ENCODE measurements at regions of chr11 and their contacts with region 1.

Region 1: DNA sequence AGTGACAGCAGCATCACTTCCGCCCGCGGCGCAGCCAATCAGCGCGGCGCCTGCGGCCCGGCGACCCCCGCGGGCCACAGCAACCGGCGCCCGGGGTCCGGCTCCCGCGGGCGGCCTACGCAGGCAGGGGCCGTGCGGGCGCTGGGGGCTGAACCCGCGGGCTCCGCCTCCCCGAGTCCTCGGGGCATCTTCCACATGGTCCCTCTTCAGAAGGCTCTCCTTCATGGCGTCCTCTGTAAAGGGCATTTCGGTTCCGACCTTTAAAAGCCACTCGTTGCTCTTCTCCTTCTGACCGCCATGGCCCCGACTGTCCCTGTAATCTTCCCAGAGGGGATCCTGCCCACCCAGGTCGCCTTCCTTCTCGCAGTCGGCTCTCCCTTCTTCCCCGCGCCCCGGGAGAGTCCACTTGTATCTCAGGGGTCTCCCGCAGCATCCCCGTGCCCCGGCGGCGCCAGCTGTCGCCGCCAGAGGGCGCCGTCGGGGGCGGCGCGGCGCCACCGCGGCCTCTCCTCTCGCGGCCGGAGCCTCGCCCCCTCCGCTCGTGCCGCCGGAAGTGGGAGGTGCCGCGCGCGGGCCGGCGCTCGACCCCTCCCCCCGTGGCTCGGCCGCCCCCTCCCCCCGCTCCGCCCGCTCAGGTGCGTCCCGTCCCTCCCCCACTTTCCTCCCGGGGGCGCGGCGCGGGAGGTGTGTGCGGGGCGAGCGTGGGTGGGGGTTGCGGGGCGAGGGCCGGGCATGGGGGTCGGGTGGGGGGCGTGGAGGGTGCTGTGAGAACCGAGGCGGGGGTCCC is at the start of gene RNF214:
- DNase-seq: peak; percentile 82
- ATAC-seq: peak; percentile 74
- H3K4me3 Mint-ChIP-seq: peak within 1 kb of the TSS; percentile 100
- H3K27ac Mint-ChIP-seq: peak within 1 kb of the TSS; percentile 100
- H3K4me1 Mint-ChIP-seq: peaks cover 43% of the 10 kb centered on the region
- H3K27me3 Mint-ChIP-seq: no peaks in the 10 kb centered on the region
- CTCF ChIP-seq: peak; percentile 69
- total RNA-seq, gene RNF214: 18.7 and 22.3 TPM in 2 replicates

Region 2: GRCh38 chr11:117117681-117118080 is 114.6 kb before region 1 on chr11:
- CTCF ChIA-PET with region 1: no interaction called
- POLR2A ChIA-PET with region 1: interaction called, 10 read pairs
- intact Hi-C with region 1: no loop called
- DNase-seq: no peak
- ATAC-seq: no peak
- H3K4me3 Mint-ChIP-seq: no peak overlapping the region
- H3K27ac Mint-ChIP-seq: no peak overlapping the region
- H3K4me1 Mint-ChIP-seq: no peaks in the 10 kb centered on the region
- H3K27me3 Mint-ChIP-seq: no peaks in the 10 kb centered on the region
- CTCF ChIP-seq: no peak

Region 3: DNA sequence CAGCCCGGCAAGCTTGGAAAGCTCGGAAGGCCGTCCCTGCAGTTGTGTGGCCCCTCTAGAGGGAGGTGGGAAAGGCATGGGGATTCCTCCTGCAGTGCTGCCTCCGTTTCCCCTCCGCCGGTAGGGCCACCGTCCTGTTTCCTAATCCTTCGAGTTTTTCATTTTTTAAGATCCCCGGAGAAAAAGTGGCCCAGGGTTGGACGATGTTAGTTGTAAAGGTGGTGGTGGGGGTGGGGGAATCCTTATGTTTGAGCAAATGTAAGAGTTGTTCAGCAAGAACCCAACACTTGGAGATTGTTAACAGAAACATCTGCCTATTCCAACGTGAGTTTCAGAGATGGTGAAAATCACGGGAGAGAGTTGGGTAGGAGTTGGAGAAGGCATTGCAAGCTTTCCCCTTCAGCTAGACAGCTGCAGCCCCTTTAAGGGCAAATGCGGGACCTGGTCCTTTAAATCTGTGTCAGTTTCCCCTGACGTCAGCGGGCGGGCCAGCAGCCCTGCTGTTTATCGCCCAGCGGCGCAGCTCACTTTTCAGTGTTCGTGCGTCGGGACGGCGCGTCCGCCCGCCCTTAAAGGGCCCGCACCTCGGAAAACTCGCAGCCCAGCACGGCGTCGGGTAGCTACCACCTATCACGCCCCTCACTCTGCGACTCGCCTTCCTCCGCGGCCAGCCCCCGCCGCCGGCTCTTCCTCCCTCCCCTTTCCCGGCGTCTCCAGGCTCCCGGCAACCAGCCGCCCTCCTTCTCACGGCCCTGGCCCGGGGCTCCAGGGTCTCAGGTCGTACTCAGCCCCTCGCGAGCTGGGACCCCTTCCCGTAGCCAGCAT is 53.9 kb before region 1 on chr11 and contains the start of gene SIDT2:
- CTCF ChIA-PET with region 1: interaction called, 119 read pairs
- POLR2A ChIA-PET with region 1: interaction called, 89 read pairs
- intact Hi-C with region 1: loop called (anchors 1 kb)
- DNase-seq: peak; percentile 80
- ATAC-seq: peak; percentile 88
- H3K4me3 Mint-ChIP-seq: peak within 1 kb of the TSS; percentile 96
- H3K27ac Mint-ChIP-seq: peak within 1 kb of the TSS; percentile 91
- H3K4me1 Mint-ChIP-seq: peaks cover 34% of the 10 kb centered on the region
- H3K27me3 Mint-ChIP-seq: no peaks in the 10 kb centered on the region
- CTCF ChIP-seq: no peak
- total RNA-seq, gene SIDT2: 96.7 and 115 TPM in 2 replicates

Region 4: DNA sequence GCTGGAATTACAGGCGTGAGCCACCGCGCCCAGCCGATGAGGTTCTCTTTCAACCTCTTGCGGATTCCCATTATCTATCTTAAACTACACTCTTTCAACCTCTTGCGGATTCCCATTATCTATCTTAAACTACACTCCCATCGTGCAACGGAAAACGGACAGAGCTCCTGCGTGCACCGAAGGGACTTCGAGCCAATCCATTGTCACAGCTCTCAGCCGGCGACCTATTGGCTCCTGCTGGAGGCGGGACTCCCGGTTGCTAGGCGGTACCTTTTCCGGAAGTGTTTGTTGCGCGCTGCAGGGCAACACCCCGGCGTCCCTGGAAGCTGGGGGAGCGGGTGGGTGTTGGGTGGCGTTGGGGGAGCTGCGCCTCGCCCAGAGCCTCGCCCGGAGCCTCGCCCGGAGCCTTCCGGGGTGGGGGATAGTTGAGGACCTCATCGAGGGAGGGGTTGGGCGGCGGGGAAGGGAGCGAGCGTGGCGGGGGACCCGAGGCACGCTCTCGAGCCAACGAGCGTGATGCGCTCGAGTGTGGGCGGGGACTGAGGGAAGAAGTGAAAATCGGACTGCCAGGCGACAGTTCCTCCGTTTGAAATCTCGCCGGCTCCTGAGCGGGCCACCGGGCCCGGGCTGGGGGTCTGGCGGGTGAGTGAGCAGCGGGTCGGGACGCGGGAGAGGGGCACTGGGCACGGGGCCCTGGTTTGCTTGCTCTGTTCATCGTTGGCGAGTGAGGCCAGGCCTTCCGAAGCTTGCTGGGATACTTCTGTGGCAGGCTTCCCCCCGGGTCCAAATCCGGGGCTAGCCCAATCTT is 95.5 kb after region 1 on chr11 and contains the start of gene CEP164:
- CTCF ChIA-PET with region 1: interaction called, 3 read pairs
- POLR2A ChIA-PET with region 1: interaction called, 20 read pairs
- intact Hi-C with region 1: loop called (anchors 1 kb)
- DNase-seq: peak; percentile 89
- ATAC-seq: peak; percentile 92
- H3K4me3 Mint-ChIP-seq: peak within 1 kb of the TSS; percentile 59
- H3K27ac Mint-ChIP-seq: no peak within 1 kb of the TSS
- H3K4me1 Mint-ChIP-seq: peaks cover 2% of the 10 kb centered on the region
- H3K27me3 Mint-ChIP-seq: no peaks in the 10 kb centered on the region
- CTCF ChIP-seq: no peak
- total RNA-seq, gene CEP164: 42.9 and 50.9 TPM in 2 replicates

Region 5: GRCh38 chr11:117535261-117535781 is 303.0 kb after region 1 on chr11:
- CTCF ChIA-PET with region 1: no interaction called
- POLR2A ChIA-PET with region 1: no interaction called
- intact Hi-C with region 1: no loop called
- DNase-seq: no peak
- ATAC-seq: no peak
- H3K4me3 Mint-ChIP-seq: no peak overlapping the region
- H3K27ac Mint-ChIP-seq: no peak overlapping the region
- H3K4me1 Mint-ChIP-seq: no peaks in the 10 kb centered on the region
- H3K27me3 Mint-ChIP-seq: peaks cover 15% of the 10 kb centered on the region
- CTCF ChIP-seq: no peak

Region 6: GRCh38 chr11:118435893-118436624 is 1203.8 kb after region 1 on chr11 and contains the start of gene KMT2A:
- CTCF ChIA-PET with region 1: no interaction called
- POLR2A ChIA-PET with region 1: no interaction called
- intact Hi-C with region 1: loop called (anchors 10 kb)
- DNase-seq: peak; percentile 99
- ATAC-seq: peak; percentile 65
- H3K4me3 Mint-ChIP-seq: peak within 1 kb of the TSS; percentile 94
- H3K27ac Mint-ChIP-seq: peak within 1 kb of the TSS; percentile 94
- H3K4me1 Mint-ChIP-seq: peaks cover 37% of the 10 kb centered on the region
- H3K27me3 Mint-ChIP-seq: no peaks in the 10 kb centered on the region
- CTCF ChIP-seq: no peak
- total RNA-seq, gene KMT2A: 104 and 117 TPM in 2 replicates

Measured in activated B cell treated with CpG ODN at 0.5 μM for 24 hours (primary cell).